Activated T-helper 1 cell treated with anti-CD3 and anti-CD28 coated beads, Interleukin-12 subunit alpha, Interleukin-12 subunit beta, Interleukin-2, Interleukin-4 antibody, amounts not matched to agents 30 ng/mL and 10 ng/mL and 1 ng/mL, durations not matched to agents 14 hours and 24 hours and 36 hours (primary cell): ENCODE measurements at regions of chr1 and their contacts with region 1.

Region 1: GRCh38 chr1:91165033-91165654 is 143.3 kb upstream of the ZNF644 start:
- DNase-seq: peak; percentile 44
- H3K4me3 Mint-ChIP-seq: no peak overlapping the region
- H3K27ac Mint-ChIP-seq: no peak overlapping the region
- H3K4me1 Mint-ChIP-seq: no peaks in the 10 kb centered on the region
- H3K27me3 Mint-ChIP-seq: no peaks in the 10 kb centered on the region

Region 2: GRCh38 chr1:90721210-90722194 is 443.6 kb before region 1 on chr1:
- intact Hi-C with region 1: loop called (anchors 1 kb)
- DNase-seq: peak; percentile 35
- H3K4me3 Mint-ChIP-seq: no peak overlapping the region
- H3K27ac Mint-ChIP-seq: peak overlapping the region; percentile 31
- H3K4me1 Mint-ChIP-seq: peaks cover 32% of the 10 kb centered on the region
- H3K27me3 Mint-ChIP-seq: peaks cover 85% of the 10 kb centered on the region

Region 3: GRCh38 chr1:90964444-90965035 is 200.6 kb before region 1 on chr1:
- intact Hi-C with region 1: loop called (anchors 10 kb)
- DNase-seq: no peak
- H3K4me3 Mint-ChIP-seq: no peak overlapping the region
- H3K27ac Mint-ChIP-seq: no peak overlapping the region
- H3K4me1 Mint-ChIP-seq: peaks cover 15% of the 10 kb centered on the region
- H3K27me3 Mint-ChIP-seq: no peaks in the 10 kb centered on the region

Region 4: DNA sequence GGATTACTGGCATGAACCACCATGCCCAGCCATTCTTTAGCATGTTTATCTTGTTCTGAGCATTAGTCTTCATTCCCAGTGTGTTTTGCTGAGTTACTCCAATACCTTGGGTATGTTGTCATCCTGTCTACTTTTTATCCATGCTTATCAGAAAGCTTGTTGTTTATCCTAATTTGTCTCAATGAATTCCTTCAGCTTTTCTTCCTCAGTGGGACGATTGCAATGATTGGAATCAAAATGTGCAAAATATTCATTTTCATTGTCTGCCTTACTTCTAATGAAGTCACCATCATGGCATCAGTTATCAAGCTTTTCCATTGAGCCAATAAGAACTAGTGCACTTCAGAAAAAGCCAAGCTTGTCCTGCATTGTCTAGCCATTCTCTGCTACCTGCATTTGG is 69.0 kb after region 1 on chr1:
- intact Hi-C with region 1: no loop called
- DNase-seq: no peak
- H3K4me3 Mint-ChIP-seq: no peak overlapping the region
- H3K27ac Mint-ChIP-seq: no peak overlapping the region
- H3K4me1 Mint-ChIP-seq: no peaks in the 10 kb centered on the region
- H3K27me3 Mint-ChIP-seq: peaks cover 9% of the 10 kb centered on the region

Region 5: DNA sequence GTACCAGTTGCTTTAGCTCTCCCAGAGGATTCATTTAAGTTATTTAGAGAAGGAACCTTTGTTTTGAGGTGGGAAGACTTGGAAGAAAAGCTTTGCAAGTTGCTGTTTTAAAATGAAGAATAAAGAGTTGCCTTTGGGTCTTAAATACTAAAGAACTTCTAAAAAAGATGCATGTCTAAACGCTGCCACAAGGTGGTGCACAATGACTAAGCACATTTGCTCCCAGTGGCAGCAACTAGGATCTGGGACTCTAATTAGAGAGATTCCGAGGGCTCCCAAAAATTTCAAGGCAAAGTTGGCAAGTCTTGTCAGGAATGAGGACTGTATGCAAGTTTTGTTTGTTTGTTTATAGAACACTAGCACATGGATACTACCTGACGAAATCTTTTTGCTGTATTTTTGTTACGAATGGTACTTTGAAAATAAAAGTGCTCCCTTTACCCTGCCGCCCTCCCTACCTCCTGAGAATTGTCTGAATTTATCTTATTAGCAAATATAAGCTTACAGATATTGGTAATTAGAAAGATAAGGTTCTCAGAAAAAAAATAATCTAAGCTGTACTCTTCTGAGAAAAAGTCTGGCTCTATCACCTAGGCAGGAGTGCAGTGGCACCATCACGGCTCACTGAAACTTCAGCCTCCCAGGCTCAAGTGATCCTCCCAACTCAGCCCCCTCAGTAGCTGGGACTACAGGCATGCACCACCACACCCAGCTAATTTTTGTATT is 117.7 kb after region 1 on chr1:
- intact Hi-C with region 1: loop called (anchors 2 kb)
- DNase-seq: peak; percentile 7
- H3K4me3 Mint-ChIP-seq: no peak overlapping the region
- H3K27ac Mint-ChIP-seq: no peak overlapping the region
- H3K4me1 Mint-ChIP-seq: no peaks in the 10 kb centered on the region
- H3K27me3 Mint-ChIP-seq: peaks cover 13% of the 10 kb centered on the region

Region 6: DNA sequence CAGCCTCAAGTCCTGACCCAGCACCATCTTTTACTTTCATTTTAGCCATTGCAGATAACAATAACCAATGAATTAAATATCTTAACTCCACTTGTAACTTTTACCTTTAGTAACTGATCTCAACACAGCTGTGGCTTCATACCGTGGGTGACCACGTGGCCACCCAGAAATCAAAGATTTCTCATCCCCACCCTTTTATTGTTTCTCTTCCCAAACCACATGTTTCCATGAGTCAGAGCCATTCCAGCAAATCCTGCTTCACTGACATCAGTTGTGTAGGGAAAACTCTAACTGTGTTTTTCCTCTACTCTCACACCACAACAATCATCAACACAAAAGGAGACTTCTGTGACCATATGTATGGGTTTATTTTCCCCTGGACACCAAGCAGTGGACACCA is 759.0 kb after region 1 on chr1:
- intact Hi-C with region 1: loop called (anchors 1 kb)
- DNase-seq: no peak
- H3K4me3 Mint-ChIP-seq: no peak overlapping the region
- H3K27ac Mint-ChIP-seq: peak overlapping the region; percentile 3
- H3K4me1 Mint-ChIP-seq: peaks cover 19% of the 10 kb centered on the region
- H3K27me3 Mint-ChIP-seq: peaks cover 11% of the 10 kb centered on the region